ENCODE measurements at regions of chr11 and their contacts with region 1.

Region 1: GRCh38 chr11:44036811-44037657 is 10.7 kb upstream of the ACCSL start:
- DNase-seq: peak in 7 of 35 experiments; percentile 2 to 37 (median 7)
- ATAC-seq: peak in 1 of 4 experiments; percentile 37
- H3K4me3 ChIP-seq: no peak overlapping the region
- H3K4me3 Mint-ChIP-seq: no peak overlapping the region
- H3K27ac ChIP-seq: no peak overlapping the region
- H3K27ac Mint-ChIP-seq: no peak overlapping the region
- H3K4me1 ChIP-seq: no peaks in the 10 kb centered on the region
- H3K4me1 Mint-ChIP-seq: no peaks in the 10 kb centered on the region
- H3K27me3 ChIP-seq: peaks cover under 1 to 6% of the 10 kb centered on the region in 2 experiments
- H3K27me3 Mint-ChIP-seq: peaks cover 11 to 12% of the 10 kb centered on the region in 2 donors

Region 2: GRCh38 chr11:44014968-44015623 is 21.9 kb before region 1 on chr11:
- CTCF ChIA-PET with region 1: interaction called in 1 of 2 experiments, 10 read pairs
- POLR2A ChIA-PET with region 1: no interaction called
- DNase-seq: no peak
- ATAC-seq: no peak
- H3K4me3 ChIP-seq: no peak overlapping the region
- H3K4me3 Mint-ChIP-seq: no peak overlapping the region
- H3K27ac ChIP-seq: no peak overlapping the region
- H3K27ac Mint-ChIP-seq: no peak overlapping the region
- H3K4me1 ChIP-seq: no peaks in the 10 kb centered on the region
- H3K4me1 Mint-ChIP-seq: no peaks in the 10 kb centered on the region
- H3K27me3 ChIP-seq: peaks cover 0 to 8% of the 10 kb centered on the region in 2 experiments
- H3K27me3 Mint-ChIP-seq: peaks cover 3 to 4% of the 10 kb centered on the region in 2 donors

Region 3: DNA sequence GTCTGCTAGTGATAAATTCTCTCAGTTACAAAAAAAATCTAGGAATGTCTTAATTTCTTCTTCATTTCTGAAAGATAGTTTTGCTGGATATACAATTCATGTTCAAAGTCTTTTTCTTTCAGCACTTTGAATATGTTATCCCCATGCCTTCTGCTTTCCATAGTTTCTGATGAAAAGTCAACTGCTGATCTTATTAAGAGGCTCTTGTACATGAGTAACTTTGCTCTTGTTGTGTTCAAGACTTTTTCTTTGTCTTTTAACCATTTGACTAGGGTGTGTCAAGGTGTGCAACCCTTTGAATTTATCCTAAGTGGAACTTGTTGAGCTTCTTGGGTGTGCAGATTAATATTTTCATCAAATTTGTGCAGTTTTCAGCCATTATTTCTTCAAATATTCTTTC is 11.3 kb before region 1 on chr11:
- CTCF ChIA-PET with region 1: no interaction called
- POLR2A ChIA-PET with region 1: no interaction called
- DNase-seq: no peak
- ATAC-seq: no peak
- H3K4me3 ChIP-seq: no peak overlapping the region
- H3K4me3 Mint-ChIP-seq: no peak overlapping the region
- H3K27ac ChIP-seq: no peak overlapping the region
- H3K27ac Mint-ChIP-seq: no peak overlapping the region
- H3K4me1 ChIP-seq: no peaks in the 10 kb centered on the region
- H3K4me1 Mint-ChIP-seq: no peaks in the 10 kb centered on the region
- H3K27me3 ChIP-seq: peaks cover 4 to 13% of the 10 kb centered on the region in 2 experiments
- H3K27me3 Mint-ChIP-seq: peaks cover 39 to 50% of the 10 kb centered on the region in 2 donors

Region 4: GRCh38 chr11:44057340-44057739 is 20.3 kb after region 1 on chr11:
- CTCF ChIA-PET with region 1: no interaction called
- POLR2A ChIA-PET with region 1: no interaction called
- DNase-seq: no peak
- ATAC-seq: no peak
- H3K4me3 ChIP-seq: no peak overlapping the region
- H3K4me3 Mint-ChIP-seq: no peak overlapping the region
- H3K27ac ChIP-seq: no peak overlapping the region
- H3K27ac Mint-ChIP-seq: no peak overlapping the region
- H3K4me1 ChIP-seq: no peaks in the 10 kb centered on the region
- H3K4me1 Mint-ChIP-seq: no peaks in the 10 kb centered on the region
- H3K27me3 ChIP-seq: no peaks in the 10 kb centered on the region
- H3K27me3 Mint-ChIP-seq: peaks cover 0 to 3% of the 10 kb centered on the region in 2 donors